Transverse colon (tissue), 4 donors: ENCODE measurements at regions of chr7 and their contacts with region 1.

Region 1: GRCh38 chr7:101138213-101138870 is 11.4 kb downstream of the SERPINE1 start:
- DNase-seq: peak; percentile 80
- H3K4me3 ChIP-seq: peak overlapping the region in 1 of 4 donors; percentile 7
- H3K27ac ChIP-seq: peak overlapping the region; percentile 37 to 54 (median 48)
- H3K4me1 ChIP-seq: peaks cover 0 to 19% (median 8%) of the 10 kb centered on the region in 4 donors
- H3K27me3 ChIP-seq: peaks cover 7% of the 10 kb centered on the region
- CTCF ChIP-seq: peak; percentile 69 to 92 (median 78)
- EP300 ChIP-seq: no peak
- POLR2A ChIP-seq: no peak

Region 2: GRCh38 chr7:100889761-100890634 is 248.3 kb before region 1 on chr7:
- in situ Hi-C with region 1: loop called in 1 of 4 experiments (anchors 10 kb)
- intact Hi-C with region 1: no loop called
- DNase-seq: peak; percentile 95
- H3K4me3 ChIP-seq: peak overlapping the region; percentile 51 to 90 (median 60)
- H3K27ac ChIP-seq: peak overlapping the region; percentile 94 to 100 (median 96)
- H3K4me1 ChIP-seq: peaks cover 32 to 55% (median 36%) of the 10 kb centered on the region in 4 donors
- H3K27me3 ChIP-seq: peaks cover 13% of the 10 kb centered on the region
- CTCF ChIP-seq: peak in 1 of 5 experiments; percentile 46
- EP300 ChIP-seq: no peak
- POLR2A ChIP-seq: peak; percentile 80

Region 3: DNA sequence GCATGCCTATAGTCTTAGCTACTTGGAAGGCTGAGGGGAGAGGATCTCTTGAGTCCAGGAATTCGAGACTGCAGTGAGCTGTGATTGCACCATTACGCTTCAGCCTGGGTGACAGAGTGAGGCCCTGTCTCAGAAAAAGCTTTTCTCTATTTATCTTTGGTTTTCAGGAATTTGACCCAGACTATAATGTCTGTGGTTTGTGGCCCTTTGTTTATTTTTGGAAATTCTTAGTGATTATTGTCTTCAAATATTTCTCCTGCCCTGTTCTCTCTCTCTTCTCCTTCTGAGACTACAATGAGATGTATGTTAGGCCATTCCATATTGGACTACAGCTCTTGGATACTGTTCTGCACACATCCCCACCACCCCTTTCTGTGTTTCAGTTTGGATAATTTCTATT is 164.3 kb before region 1 on chr7:
- in situ Hi-C with region 1: no loop called
- intact Hi-C with region 1: no loop called
- DNase-seq: no peak
- H3K4me3 ChIP-seq: peak overlapping the region in 1 of 4 donors; percentile 42
- H3K27ac ChIP-seq: peak overlapping the region; percentile 80 to 87 (median 82)
- H3K4me1 ChIP-seq: peaks cover 0 to 24% (median 8%) of the 10 kb centered on the region in 4 donors
- H3K27me3 ChIP-seq: no peaks in the 10 kb centered on the region
- CTCF ChIP-seq: no peak
- EP300 ChIP-seq: no peak
- POLR2A ChIP-seq: no peak

Region 4: DNA sequence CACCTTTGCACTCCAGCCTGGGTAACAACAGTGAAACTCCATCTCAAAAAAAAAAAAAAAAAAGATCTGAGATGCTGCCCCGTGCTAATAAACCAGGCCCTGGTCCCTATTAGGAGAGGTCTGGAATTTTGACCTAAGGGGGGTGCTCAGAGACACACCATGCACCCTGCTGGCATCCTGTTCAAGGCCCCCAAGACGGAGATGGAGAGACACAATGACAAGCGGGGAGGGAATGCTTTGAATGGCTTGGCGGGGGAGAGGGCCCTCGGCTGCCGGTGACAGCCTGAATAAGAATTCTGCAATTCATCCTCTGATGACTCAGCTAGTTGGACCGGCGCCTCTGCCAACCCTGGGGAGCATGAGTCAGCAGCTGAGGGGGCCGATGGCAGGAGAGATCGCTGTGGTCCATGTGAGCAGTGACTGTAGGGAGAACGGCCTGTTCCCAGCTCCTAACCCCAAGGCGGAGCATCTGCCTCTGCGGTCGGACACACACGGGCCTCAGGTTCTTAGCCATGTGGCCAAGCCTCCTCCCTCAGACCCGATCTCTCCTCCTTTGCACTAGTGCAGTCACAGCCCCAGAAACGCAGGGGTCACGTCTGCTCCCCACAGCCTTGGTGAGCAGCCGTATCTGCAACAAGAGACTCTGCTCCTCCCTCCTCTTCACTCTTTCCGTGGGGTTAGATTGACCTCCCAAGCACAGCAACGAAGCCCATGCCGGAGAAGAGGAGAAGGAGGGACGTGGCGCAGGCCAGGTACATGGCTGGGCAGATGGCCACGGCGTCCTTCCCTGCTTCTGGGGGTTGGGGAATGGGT is 38.2 kb before region 1 on chr7:
- in situ Hi-C with region 1: loop called in 1 of 4 experiments (anchors 5 kb)
- intact Hi-C with region 1: no loop called
- DNase-seq: peak; percentile 85
- H3K4me3 ChIP-seq: no peak overlapping the region
- H3K27ac ChIP-seq: peak overlapping the region; percentile 51 to 79 (median 71)
- H3K4me1 ChIP-seq: peaks cover 6 to 19% (median 12%) of the 10 kb centered on the region in 4 donors
- H3K27me3 ChIP-seq: no peaks in the 10 kb centered on the region
- CTCF ChIP-seq: no peak
- EP300 ChIP-seq: peak; percentile 39
- POLR2A ChIP-seq: peak; percentile 10

Region 5: GRCh38 chr7:101126651-101127280 is 11.6 kb before region 1 on chr7 and contains the start of gene SERPINE1:
- in situ Hi-C with region 1: no loop called
- intact Hi-C with region 1: no loop called
- DNase-seq: peak; percentile 74
- H3K4me3 ChIP-seq: peak within 1 kb of the TSS in 1 of 4 donors; percentile 20
- H3K27ac ChIP-seq: peak within 1 kb of the TSS; percentile 59 to 74 (median 63)
- H3K4me1 ChIP-seq: peaks cover 16 to 45% (median 21%) of the 10 kb centered on the region in 4 donors
- H3K27me3 ChIP-seq: peaks cover 6% of the 10 kb centered on the region
- CTCF ChIP-seq: no peak
- EP300 ChIP-seq: no peak
- POLR2A ChIP-seq: peak; percentile 69
- total RNA-seq, gene SERPINE1: 1.3 to 26.2 (median 5.5) TPM

Region 6: GRCh38 chr7:101197991-101198390 is 59.6 kb after region 1 on chr7:
- in situ Hi-C with region 1: loop called in 1 of 4 experiments (anchors 10 kb)
- intact Hi-C with region 1: no loop called
- DNase-seq: no peak
- H3K4me3 ChIP-seq: no peak overlapping the region
- H3K27ac ChIP-seq: no peak overlapping the region
- H3K4me1 ChIP-seq: peaks cover 0 to 23% (median 10%) of the 10 kb centered on the region in 4 donors
- H3K27me3 ChIP-seq: peaks cover 50% of the 10 kb centered on the region
- CTCF ChIP-seq: no peak
- EP300 ChIP-seq: no peak
- POLR2A ChIP-seq: no peak

Region 7: DNA sequence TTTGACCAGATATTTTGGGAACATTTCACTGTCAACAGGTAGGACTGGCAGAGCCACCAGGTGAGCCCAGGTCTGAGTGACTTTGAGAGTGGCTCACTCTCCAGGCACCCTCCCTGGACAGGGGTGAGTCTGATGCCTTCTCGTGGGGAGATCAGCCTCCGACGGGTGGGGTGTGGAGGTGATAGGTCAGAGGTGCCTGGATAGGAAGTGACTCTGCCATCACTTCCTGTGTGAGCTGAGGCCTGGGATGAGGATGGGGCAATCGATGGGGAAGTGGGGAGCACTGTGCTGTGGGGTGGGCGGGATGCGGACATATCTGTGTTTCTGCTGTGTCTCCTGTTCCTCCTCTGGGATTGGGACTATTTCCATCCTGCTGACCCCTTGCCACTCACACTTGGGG is 148.7 kb after region 1 on chr7:
- in situ Hi-C with region 1: loop called in 2 of 4 experiments (anchors 10 to 25 kb)
- intact Hi-C with region 1: loop called (anchors 5 kb)
- DNase-seq: no peak
- H3K4me3 ChIP-seq: no peak overlapping the region
- H3K27ac ChIP-seq: no peak overlapping the region
- H3K4me1 ChIP-seq: peaks cover 0 to 4% (median 2%) of the 10 kb centered on the region in 4 donors
- H3K27me3 ChIP-seq: peaks cover 20% of the 10 kb centered on the region
- CTCF ChIP-seq: no peak
- EP300 ChIP-seq: no peak
- POLR2A ChIP-seq: no peak

Region 8: DNA sequence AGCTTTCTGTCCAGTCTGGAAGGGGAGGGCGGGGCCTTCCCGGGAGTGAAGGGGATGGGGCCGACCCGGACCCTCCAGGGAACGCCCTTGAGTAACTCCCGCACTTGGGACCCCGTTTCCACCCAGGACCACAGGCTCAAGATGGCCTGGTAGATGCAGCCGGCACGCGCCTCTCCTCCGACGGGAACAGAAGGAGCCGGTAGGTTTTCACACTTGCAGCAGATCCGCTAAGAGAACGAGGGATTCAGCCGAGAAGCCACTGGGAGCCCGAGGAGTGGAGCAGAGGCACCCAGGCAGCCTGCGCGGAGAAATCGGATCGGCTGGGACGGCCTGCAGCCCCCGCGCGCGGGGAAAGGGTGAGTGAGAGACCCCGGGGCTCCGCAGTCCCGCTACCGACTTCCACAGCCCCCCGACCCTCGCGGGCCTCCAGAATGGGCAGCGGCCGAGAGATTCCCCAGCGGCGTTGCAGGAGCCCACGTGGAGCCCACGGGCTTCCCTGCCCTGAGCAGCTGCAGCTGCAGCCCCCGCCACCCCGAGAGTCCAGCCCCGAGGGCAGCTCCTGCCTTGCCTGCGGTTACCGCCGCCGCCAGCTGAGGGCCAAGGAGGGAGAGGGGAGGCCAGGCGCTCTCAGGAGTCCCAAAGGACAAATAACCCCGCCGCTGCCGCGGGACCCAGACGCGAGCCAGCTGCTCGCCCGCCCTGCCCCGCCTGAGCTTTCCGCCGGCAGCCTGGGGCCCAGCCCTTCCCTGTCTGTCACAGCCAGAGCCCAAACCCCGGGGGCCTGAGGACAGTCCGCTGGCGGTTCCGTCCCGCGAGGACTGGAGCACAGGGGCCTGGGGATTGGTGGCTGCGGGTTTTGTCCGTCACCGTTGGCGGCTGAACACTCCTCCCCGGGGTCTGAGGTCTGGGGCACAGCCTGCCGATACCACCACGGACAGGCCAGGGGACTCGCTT is 161.4 kb after region 1 on chr7:
- in situ Hi-C with region 1: loop called in 2 of 4 experiments (anchors 10 to 25 kb)
- intact Hi-C with region 1: no loop called
- DNase-seq: no peak
- H3K4me3 ChIP-seq: no peak overlapping the region
- H3K27ac ChIP-seq: no peak overlapping the region
- H3K4me1 ChIP-seq: peaks cover 0 to 4% (median 0%) of the 10 kb centered on the region in 4 donors
- H3K27me3 ChIP-seq: peaks cover 100% of the 10 kb centered on the region
- CTCF ChIP-seq: no peak
- EP300 ChIP-seq: no peak
- POLR2A ChIP-seq: no peak